Breast epithelium (tissue), 4 donors: ENCODE measurements at regions of chr4 and their contacts with region 1.

Region 1: DNA sequence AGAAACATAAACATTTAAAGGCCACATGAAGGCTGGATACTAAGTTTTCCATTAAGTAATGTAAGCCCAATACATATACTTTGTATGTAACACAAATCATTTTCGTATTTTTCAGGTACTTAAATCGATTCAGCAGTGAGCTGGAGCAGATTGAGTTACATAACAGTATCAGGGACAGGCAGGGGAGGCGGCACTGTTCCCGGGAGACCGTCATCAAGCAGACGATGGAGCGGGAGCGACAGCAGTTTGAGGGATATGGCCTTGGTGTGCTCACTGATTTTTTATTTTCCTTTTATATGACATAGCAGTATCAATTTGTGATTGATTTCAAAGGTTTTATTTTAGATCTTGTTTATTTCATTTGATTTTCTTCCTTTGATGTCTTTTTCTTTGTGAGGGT is 20.7 kb downstream of the TMA16 start:
- DNase-seq: no peak
- H3K4me3 ChIP-seq: no peak overlapping the region
- H3K27ac ChIP-seq: no peak overlapping the region
- H3K4me1 ChIP-seq: no peaks in the 10 kb centered on the region
- H3K27me3 ChIP-seq: no peaks in the 10 kb centered on the region
- CTCF ChIP-seq: no peak
- POLR2A ChIP-seq: no peak

Region 2: GRCh38 chr4:163710158-163710557 is 195.0 kb after region 1 on chr4:
- intact Hi-C with region 1: loop called (anchors 5 kb)
- DNase-seq: no peak
- H3K4me3 ChIP-seq: no peak overlapping the region
- H3K27ac ChIP-seq: no peak overlapping the region
- H3K4me1 ChIP-seq: no peaks in the 10 kb centered on the region
- H3K27me3 ChIP-seq: no peaks in the 10 kb centered on the region
- CTCF ChIP-seq: no peak
- POLR2A ChIP-seq: no peak